ENCODE measurements at regions of chr6 and their contacts with region 1.

Region 1: GRCh38 chr6:104325341-104326172 is 534.2 kb downstream of the HACE1 start:
- DNase-seq: peak; percentile 43
- H3K4me3 ChIP-seq: no peak overlapping the region
- H3K27ac ChIP-seq: no peak overlapping the region
- H3K4me1 ChIP-seq: no peaks in the 10 kb centered on the region
- H3K27me3 ChIP-seq: no peaks in the 10 kb centered on the region
- CTCF ChIP-seq: peak; percentile 46 to 54
- POLR2A ChIP-seq: no peak

Region 2: GRCh38 chr6:102853269-102853955 is 1472.1 kb before region 1 on chr6:
- CTCF ChIA-PET with region 1: no interaction called
- POLR2A ChIA-PET with region 1: no interaction called
- dilution Hi-C with region 1: no loop called
- intact Hi-C with region 1: loop called (anchors 5 kb)
- DNase-seq: no peak
- H3K4me3 ChIP-seq: no peak overlapping the region
- H3K27ac ChIP-seq: no peak overlapping the region
- H3K4me1 ChIP-seq: no peaks in the 10 kb centered on the region
- H3K27me3 ChIP-seq: no peaks in the 10 kb centered on the region
- CTCF ChIP-seq: no peak
- POLR2A ChIP-seq: no peak

Region 3: DNA sequence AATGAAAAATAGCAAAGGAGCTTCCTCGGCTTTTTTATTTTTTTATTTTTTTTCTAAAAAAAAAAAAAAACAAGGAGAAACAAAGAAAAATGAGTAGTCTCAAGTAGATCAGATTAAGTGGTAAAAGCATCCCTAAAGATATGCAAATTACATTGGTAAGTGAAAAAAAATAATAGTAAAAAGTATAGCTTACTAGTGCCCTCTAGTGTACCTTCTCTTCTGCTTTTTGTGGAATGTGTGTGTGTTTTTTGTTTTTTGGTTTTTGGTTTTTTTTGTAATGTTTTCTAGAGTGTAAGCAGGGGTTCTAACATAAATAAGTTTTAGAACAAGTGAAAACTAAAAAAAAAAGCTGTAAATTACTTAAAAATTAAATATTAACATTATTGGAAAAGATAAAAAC is 527.8 kb before region 1 on chr6:
- CTCF ChIA-PET with region 1: no interaction called
- POLR2A ChIA-PET with region 1: no interaction called
- dilution Hi-C with region 1: no loop called
- intact Hi-C with region 1: loop called (anchors 5 kb)
- DNase-seq: peak; percentile 7
- H3K4me3 ChIP-seq: no peak overlapping the region
- H3K27ac ChIP-seq: no peak overlapping the region
- H3K4me1 ChIP-seq: no peaks in the 10 kb centered on the region
- H3K27me3 ChIP-seq: no peaks in the 10 kb centered on the region
- CTCF ChIP-seq: peak; percentile 12 to 36
- POLR2A ChIP-seq: no peak

Region 4: GRCh38 chr6:104771258-104771832 is 445.8 kb after region 1 on chr6:
- CTCF ChIA-PET with region 1: no interaction called
- POLR2A ChIA-PET with region 1: no interaction called
- dilution Hi-C with region 1: no loop called
- intact Hi-C with region 1: loop called (anchors 1 kb)
- DNase-seq: peak; percentile 51
- H3K4me3 ChIP-seq: no peak overlapping the region
- H3K27ac ChIP-seq: no peak overlapping the region
- H3K4me1 ChIP-seq: peaks cover 7% of the 10 kb centered on the region
- H3K27me3 ChIP-seq: no peaks in the 10 kb centered on the region
- CTCF ChIP-seq: peak; percentile 14 to 33
- POLR2A ChIP-seq: no peak